ENCODE measurements at regions of chr10 and their contacts with region 1.

Region 1: GRCh38 chr10:92052088-92052487 is 128.5 kb downstream of the BTAF1 start:
- DNase-seq: peak; percentile 95

Region 2: GRCh38 chr10:91974960-91975359 is 77.1 kb before region 1 on chr10:
- in situ Hi-C with region 1: loop called (anchors 10 kb)
- DNase-seq: no peak

Measured in G401 (cell line).